ENCODE measurements at regions of chr22 and their contacts with region 1.

Region 1: GRCh38 chr22:35177811-35178210 is 79.5 kb upstream of the HMGXB4 start:
- DNase-seq: no peak
- H3K4me3 ChIP-seq: no peak overlapping the region
- H3K27ac ChIP-seq: no peak overlapping the region
- H3K4me1 ChIP-seq: peaks cover 0 to 2% (median 0%) of the 10 kb centered on the region in 4 experiments; a peak in 1 of 7 replicates
- H3K27me3 ChIP-seq: no peaks in the 10 kb centered on the region
- CTCF ChIP-seq: peak; percentile 47 to 56 (median 54)
- EP300 ChIP-seq: no peak
- POLR2A ChIP-seq: no peak
- RAD21 ChIP-seq: peak; percentile 18 to 42; a peak in 2 of 4 replicates

Region 2: GRCh38 chr22:35023692-35024363 is 154.0 kb before region 1 on chr22:
- CTCF ChIA-PET with region 1: no interaction called
- POLR2A ChIA-PET with region 1: no interaction called
- DNase-seq: peak; percentile 63 to 99
- H3K4me3 ChIP-seq: peak overlapping the region in 2 of 4 experiments; percentile 29 to 38; a peak in 2 of 8 replicates
- H3K27ac ChIP-seq: no peak overlapping the region
- H3K4me1 ChIP-seq: no peaks in the 10 kb centered on the region; a peak in 2 of 7 replicates
- H3K27me3 ChIP-seq: peaks cover 0 to 4% (median 2%) of the 10 kb centered on the region in 4 experiments; a peak in 1 of 7 replicates
- CTCF ChIP-seq: peak; percentile 92 to 93 (median 93)
- EP300 ChIP-seq: no peak
- POLR2A ChIP-seq: no peak
- RAD21 ChIP-seq: peak; percentile 97 to 99

Region 3: GRCh38 chr22:35158336-35158735 is 19.5 kb before region 1 on chr22:
- CTCF ChIA-PET with region 1: interaction called, 14 read pairs
- POLR2A ChIA-PET with region 1: no interaction called
- DNase-seq: no peak
- H3K4me3 ChIP-seq: no peak overlapping the region
- H3K27ac ChIP-seq: no peak overlapping the region
- H3K4me1 ChIP-seq: peaks cover 0 to 4% (median 0%) of the 10 kb centered on the region in 4 experiments; a peak in 1 of 7 replicates
- H3K27me3 ChIP-seq: 0 out of 7 replicates have a peak, but pooled peaks cover 0 to under 1% (median 0%) of the 10 kb centered on the region in 4 experiments
- CTCF ChIP-seq: no peak
- EP300 ChIP-seq: no peak
- POLR2A ChIP-seq: no peak
- RAD21 ChIP-seq: no peak